BJ (cell line): ENCODE measurements at regions of chr2 and their contacts with region 1.

Region 1: DNA sequence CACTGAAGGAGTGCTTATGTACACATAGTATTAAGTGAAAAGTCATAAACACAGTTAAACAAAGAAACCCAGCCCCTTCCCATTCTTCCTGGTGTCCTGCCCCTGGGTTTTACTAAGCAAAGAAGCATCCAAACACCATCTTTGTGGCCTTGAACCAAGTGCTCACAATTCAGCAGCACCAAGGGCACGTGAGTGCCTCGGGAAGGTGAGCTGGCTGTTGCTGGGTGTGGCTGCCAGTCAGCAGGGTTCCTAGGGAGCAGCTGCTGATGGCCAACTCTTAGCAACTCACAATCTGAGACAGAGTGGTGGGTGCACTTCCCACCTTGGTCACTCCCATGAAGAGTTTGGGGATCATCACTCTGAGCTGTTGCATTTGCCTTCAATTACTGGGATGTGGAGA is 97.7 kb upstream of the PGAP1 start:
- DNase-seq: no peak
- H3K4me3 ChIP-seq: no peak overlapping the region
- H3K27me3 ChIP-seq: no peaks in the 10 kb centered on the region
- CTCF ChIP-seq: no peak

Region 2: DNA sequence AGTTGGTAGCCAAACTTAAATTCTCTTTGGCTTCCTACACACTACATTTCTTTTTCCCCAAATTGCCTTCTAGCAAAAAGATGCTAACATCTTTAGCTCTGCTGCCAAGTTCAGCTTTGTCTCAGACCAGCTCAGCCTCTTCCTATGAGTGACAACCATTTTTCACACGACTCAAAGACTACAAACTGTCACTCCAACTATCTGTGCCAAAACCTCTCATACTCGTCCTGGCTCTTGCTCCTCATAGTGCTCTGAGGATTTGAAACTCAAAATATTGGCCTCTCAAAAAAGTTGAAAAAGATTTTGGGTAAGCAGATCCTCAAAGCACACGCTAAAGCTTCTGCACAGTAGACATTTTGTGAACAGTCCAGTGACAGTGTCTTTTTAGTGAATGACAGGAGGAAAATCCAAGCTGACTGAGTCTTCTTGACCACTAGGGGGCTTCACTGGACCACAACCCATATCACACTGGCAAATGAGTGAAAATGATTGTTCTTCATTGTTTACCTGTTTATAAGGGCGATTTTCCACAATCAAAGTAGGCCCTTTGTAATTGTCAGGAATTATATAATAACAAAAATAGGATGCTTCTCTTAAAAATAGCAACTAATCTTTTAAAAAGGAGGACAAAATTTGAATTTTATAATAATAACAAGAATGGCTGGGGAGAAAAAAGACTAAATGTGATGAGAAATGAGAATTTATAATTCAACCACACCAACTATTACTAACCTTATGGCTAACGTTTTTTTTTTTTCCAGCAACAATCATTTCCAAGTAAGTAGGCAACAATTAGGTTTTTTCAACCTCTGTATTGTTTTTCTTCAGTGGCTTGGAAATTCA is 12.2 kb before region 1 on chr2:
- CTCF ChIA-PET with region 1: interaction called, 10 read pairs
- POLR2A ChIA-PET with region 1: no interaction called
- DNase-seq: no peak
- H3K4me3 ChIP-seq: no peak overlapping the region
- H3K27me3 ChIP-seq: no peaks in the 10 kb centered on the region
- CTCF ChIP-seq: peak; percentile 84